ENCODE measurements at regions of chr14 and their contacts with region 1.

Region 1: DNA sequence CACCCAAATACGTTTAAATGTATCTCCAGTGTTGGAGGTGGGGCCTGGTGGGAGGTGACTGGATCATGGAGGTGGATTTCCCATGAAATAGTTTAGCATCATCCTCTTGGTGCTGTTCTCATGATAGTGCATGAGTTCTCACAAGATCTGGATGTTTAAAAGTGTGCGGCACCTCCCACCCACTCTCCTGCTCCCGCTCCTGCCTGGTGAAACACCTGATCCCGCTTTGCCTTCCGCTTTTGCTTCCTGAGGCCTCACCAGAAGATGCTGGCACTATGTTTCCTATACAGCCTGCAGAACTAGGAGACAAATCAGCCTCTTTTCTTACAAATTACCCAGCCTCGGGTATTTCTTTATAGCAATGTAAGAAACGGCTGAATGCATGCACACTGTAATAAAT is 20.1 kb downstream of the EIF5 start:
- DNase-seq: no peak
- H3K4me3 ChIP-seq: no peak overlapping the region
- H3K27ac ChIP-seq: no peak overlapping the region
- H3K4me1 ChIP-seq: peaks cover 39% of the 10 kb centered on the region
- H3K27me3 ChIP-seq: no peaks in the 10 kb centered on the region
- CTCF ChIP-seq: no peak

Region 2: GRCh38 chr14:103179094-103179493 is 175.0 kb before region 1 on chr14:
- CTCF ChIA-PET with region 1: no interaction called
- POLR2A ChIA-PET with region 1: no interaction called
- intact Hi-C with region 1: no loop called
- DNase-seq: no peak
- H3K4me3 ChIP-seq: no peak overlapping the region
- H3K27ac ChIP-seq: no peak overlapping the region
- H3K4me1 ChIP-seq: peaks cover 14% of the 10 kb centered on the region; the same call in 1 of the 2 replicates
- H3K27me3 ChIP-seq: no peaks in the 10 kb centered on the region
- CTCF ChIP-seq: no peak

Region 3: DNA sequence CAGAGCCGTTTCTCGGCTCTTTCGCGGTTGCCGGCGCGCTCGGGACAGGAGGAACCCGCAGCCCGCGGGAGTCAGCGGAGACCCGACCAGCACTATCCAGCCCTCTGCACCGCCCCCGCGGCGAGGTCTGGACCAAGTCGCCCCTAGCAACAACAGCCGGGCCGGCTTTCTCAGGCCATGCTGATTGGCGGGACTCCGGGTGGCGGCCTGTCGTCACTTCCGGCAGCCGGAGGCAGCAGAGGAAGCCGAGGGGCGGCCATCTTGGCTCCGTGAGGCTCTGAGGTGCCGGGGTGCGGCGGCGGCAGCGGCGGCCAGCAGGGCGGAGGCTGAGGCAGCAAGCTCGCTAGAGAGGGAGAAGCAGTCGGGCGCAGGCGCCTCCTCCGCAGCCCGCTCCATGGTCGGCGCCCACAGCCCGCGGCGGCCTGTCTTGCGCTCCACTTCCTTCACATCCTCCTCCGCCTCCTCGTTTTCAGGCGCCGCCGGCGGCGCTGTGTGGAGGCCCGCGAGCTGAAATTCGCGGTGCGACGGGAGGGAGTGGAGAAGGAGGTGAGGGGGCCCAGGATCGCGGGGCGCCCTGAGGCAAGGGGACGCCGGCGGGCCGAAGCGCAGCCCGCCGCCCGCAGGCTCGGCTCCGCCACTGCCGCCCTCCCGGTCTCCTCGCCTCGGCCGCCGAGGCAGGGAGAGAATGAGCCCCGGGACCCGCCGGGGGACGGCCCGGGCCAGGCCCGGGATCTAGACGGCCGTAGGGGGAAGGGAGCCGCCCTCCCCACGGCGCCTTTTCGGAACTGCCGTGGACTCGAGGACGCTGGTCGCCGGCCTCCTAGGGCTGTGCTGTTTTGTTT is 31.2 kb after region 1 on chr14 and contains the start of gene MARK3:
- CTCF ChIA-PET with region 1: interaction called, 6 read pairs
- POLR2A ChIA-PET with region 1: no interaction called
- intact Hi-C with region 1: loop called (anchors 2 kb)
- DNase-seq: peak; percentile 98 to 100
- H3K4me3 ChIP-seq: peak within 1 kb of the TSS; percentile 72
- H3K27ac ChIP-seq: peak within 1 kb of the TSS; percentile 66
- H3K4me1 ChIP-seq: peaks cover 32% of the 10 kb centered on the region
- H3K27me3 ChIP-seq: no peaks in the 10 kb centered on the region
- CTCF ChIP-seq: peak; percentile 53; the same call in 1 of the 2 replicates
- total RNA-seq, gene MARK3: 189 and 191 TPM in 2 replicates

Region 4: GRCh38 chr14:103504991-103505565 is 150.9 kb after region 1 on chr14:
- CTCF ChIA-PET with region 1: no interaction called
- POLR2A ChIA-PET with region 1: no interaction called
- intact Hi-C with region 1: no loop called
- DNase-seq: no peak
- H3K4me3 ChIP-seq: no peak overlapping the region
- H3K27ac ChIP-seq: no peak overlapping the region
- H3K4me1 ChIP-seq: no peaks in the 10 kb centered on the region
- H3K27me3 ChIP-seq: no peaks in the 10 kb centered on the region
- CTCF ChIP-seq: peak; percentile 34; the same call in 1 of the 2 replicates

Region 5: DNA sequence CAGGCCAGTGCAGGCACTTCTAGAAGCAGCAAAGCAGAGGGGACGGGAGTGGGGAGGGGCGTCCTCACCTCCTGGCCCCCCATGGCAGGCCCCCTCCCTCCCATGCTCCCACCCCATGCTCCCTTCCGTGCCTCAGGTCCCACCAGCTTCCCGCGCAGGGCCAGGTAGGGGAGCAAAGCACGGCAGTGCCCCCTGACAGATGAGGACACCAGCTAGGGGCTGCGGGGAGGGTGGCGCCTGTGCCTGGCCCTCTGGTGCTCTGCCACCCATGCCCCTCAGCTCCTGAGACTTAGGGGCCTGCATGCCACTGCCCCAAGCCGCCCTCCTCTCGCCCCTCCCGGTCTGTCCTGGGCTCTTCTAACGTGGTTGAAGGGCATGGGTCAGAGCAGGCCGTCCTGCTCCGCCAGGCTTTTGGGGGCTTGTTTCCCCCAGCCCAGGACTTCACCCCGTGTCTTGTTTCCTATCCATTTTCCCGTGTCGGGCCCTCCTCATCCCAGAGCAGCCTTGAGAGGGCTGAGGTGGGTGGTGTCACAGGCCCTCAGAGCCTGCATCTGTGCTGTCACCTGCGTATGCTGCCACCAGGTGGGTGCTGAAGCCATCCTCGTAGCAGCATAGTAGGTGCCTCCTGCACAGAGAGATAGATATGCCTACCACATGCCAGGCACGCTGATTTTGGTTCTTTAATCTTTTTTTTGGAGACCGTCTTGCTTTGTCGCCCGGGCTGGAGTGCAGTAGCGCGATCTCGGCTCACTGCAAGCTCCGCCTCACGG is 185.1 kb after region 1 on chr14:
- CTCF ChIA-PET with region 1: no interaction called
- POLR2A ChIA-PET with region 1: no interaction called
- intact Hi-C with region 1: no loop called
- DNase-seq: no peak
- H3K4me3 ChIP-seq: no peak overlapping the region
- H3K27ac ChIP-seq: peak overlapping the region; percentile 96
- H3K4me1 ChIP-seq: peaks cover 58% of the 10 kb centered on the region
- H3K27me3 ChIP-seq: no peaks in the 10 kb centered on the region
- CTCF ChIP-seq: no peak

Measured in PC-9 (cell line).